Ascending aorta (tissue), 2 donors: ENCODE measurements at regions of chr5 and their contacts with region 1.

Region 1: GRCh38 chr5:159100025-159100781 is 487 bp upstream of the EBF1 start:
- DNase-seq: peak; percentile 67 to 96
- H3K4me3 ChIP-seq: peak overlapping the region; percentile 70 to 77
- H3K27ac ChIP-seq: peak overlapping the region; percentile 94 to 97
- H3K4me1 ChIP-seq: peaks cover 7 to 15% of the 10 kb centered on the region in 2 donors
- H3K27me3 ChIP-seq: no peaks in the 10 kb centered on the region
- CTCF ChIP-seq: peak in 2 of 3 experiments; percentile 6 to 12

Region 2: DNA sequence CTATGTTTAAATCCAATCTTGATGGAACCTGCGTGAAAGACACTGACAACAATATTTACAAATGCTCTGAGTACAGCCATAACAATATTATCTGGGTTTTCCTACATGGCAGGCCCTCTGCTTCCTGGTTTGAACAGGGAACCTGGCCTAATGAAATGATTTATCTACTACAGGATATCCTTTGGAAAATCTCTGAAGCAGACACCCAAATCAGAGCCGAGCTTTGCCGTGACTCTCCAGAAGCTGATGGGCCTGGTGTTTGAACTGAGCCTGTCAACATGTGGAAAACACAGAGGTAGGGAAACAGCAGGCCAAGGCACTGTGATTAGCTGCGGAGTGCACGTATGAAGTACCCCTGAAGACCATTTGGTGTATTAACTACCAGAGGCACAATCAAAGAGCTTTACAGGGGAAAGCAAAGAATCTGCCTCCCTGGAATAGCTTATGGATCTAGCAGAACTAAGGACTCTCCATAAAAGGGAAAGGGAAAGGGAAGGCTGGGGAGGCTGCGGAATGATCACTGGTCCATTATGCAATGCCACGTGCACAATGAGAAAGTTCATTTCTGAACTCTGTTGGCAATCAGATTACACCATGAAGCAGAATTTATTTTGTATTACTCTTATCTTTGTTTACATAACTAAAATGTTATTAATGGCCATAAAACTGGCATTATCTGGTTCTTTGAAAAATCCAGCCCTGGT is 322.4 kb before region 1 on chr5:
- intact Hi-C with region 1: loop called (anchors 5 kb)
- DNase-seq: no peak
- H3K4me3 ChIP-seq: no peak overlapping the region
- H3K27ac ChIP-seq: peak overlapping the region; percentile 54 to 75
- H3K4me1 ChIP-seq: peaks cover 4 to 58% of the 10 kb centered on the region in 2 donors
- H3K27me3 ChIP-seq: no peaks in the 10 kb centered on the region
- CTCF ChIP-seq: no peak

Region 3: DNA sequence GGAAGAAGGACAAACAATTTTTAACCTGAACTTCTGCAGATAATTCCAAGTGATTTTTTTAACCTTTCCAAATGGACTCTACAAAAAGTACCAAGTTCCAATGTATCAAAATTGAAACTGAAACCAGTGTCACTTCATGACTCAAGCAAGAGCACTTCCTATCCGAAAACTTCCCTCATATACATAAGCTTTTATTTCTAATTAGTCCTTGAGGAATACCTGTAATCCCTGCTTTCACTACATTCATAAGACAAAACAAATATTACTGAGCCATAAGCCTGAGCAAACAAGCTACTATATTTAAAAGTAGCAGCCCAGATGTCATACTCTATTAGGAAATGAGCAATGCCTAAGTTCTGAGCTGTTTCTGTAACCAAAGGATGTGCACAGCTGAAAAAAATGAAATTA is 224.9 kb before region 1 on chr5:
- intact Hi-C with region 1: loop called (anchors 5 kb)
- DNase-seq: no peak
- H3K4me3 ChIP-seq: peak overlapping the region; percentile 37 to 54
- H3K27ac ChIP-seq: peak overlapping the region; percentile 55 to 71
- H3K4me1 ChIP-seq: peaks cover 3 to 47% of the 10 kb centered on the region in 2 donors
- H3K27me3 ChIP-seq: no peaks in the 10 kb centered on the region
- CTCF ChIP-seq: no peak

Region 4: GRCh38 chr5:158979749-158980521 is 120.3 kb before region 1 on chr5:
- intact Hi-C with region 1: loop called (anchors 2 kb)
- DNase-seq: peak in 1 of 2 donors; percentile 81
- H3K4me3 ChIP-seq: peak overlapping the region; percentile 28 to 54
- H3K27ac ChIP-seq: peak overlapping the region; percentile 75 to 76
- H3K4me1 ChIP-seq: peaks cover 7 to 43% of the 10 kb centered on the region in 2 donors
- H3K27me3 ChIP-seq: no peaks in the 10 kb centered on the region
- CTCF ChIP-seq: no peak

Region 5: DNA sequence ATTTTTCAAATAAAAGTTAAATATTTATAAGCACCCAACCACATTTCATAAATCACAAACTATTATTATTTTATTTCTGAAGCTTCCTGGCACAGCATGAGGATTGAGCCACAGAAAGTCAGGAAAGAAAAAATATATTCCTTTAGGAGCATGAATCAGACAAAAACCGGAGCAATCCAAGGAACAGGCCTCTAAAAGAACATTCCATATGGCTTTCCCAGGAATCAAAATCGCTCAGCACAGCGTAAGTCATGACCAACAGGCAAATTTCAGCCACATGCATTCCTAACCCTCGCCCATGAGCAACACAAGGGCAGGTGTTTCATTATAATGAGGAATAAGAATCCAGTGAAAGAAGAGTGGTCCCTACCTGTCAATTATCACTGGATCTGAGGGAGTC is 27.2 kb before region 1 on chr5:
- intact Hi-C with region 1: loop called (anchors 2 kb)
- DNase-seq: no peak
- H3K4me3 ChIP-seq: peak overlapping the region in 1 of 2 donors; percentile 49
- H3K27ac ChIP-seq: peak overlapping the region; percentile 85 to 91
- H3K4me1 ChIP-seq: peaks cover 9 to 60% of the 10 kb centered on the region in 2 donors
- H3K27me3 ChIP-seq: no peaks in the 10 kb centered on the region
- CTCF ChIP-seq: no peak